Heart right ventricle (tissue), 16 donors: ENCODE measurements at regions of chr17 and their contacts with region 1.

Region 1: GRCh38 chr17:64773836-64774761 is 112.0 kb upstream of the SMURF2 start:
- DNase-seq: no peak
- ATAC-seq: peak in 1 of 8 donors; percentile 1
- H3K4me3 ChIP-seq: no peak overlapping the region
- H3K27ac ChIP-seq: no peak overlapping the region
- H3K4me1 ChIP-seq: peaks cover 15 to 45% (median 27%) of the 10 kb centered on the region in 9 donors
- H3K27me3 ChIP-seq: peaks cover 0 to 13% (median 5%) of the 10 kb centered on the region in 7 donors
- CTCF ChIP-seq: peak in 5 of 9 donors; percentile 7 to 42 (median 29)

Region 2: GRCh38 chr17:64635647-64636307 is 138.3 kb before region 1 on chr17:
- intact Hi-C with region 1: no loop called
- DNase-seq: no peak
- ATAC-seq: no peak
- H3K4me3 ChIP-seq: no peak overlapping the region
- H3K27ac ChIP-seq: no peak overlapping the region
- H3K4me1 ChIP-seq: peaks cover 0 to 52% (median 10%) of the 10 kb centered on the region in 9 donors
- H3K27me3 ChIP-seq: no peaks in the 10 kb centered on the region
- CTCF ChIP-seq: no peak

Region 3: GRCh38 chr17:64707019-64707591 is 67.0 kb before region 1 on chr17:
- intact Hi-C with region 1: loop called in 2 of 10 experiments (anchors 2 to 10 kb)
- DNase-seq: peak; percentile 84 to 93
- ATAC-seq: peak; percentile 84 to 97 (median 94)
- H3K4me3 ChIP-seq: no peak overlapping the region
- H3K27ac ChIP-seq: peak overlapping the region in 8 of 10 donors; percentile 54 to 86 (median 64)
- H3K4me1 ChIP-seq: peaks cover 0 to 45% (median 32%) of the 10 kb centered on the region in 9 donors
- H3K27me3 ChIP-seq: no peaks in the 10 kb centered on the region
- CTCF ChIP-seq: no peak

Region 4: GRCh38 chr17:64718059-64718458 is 56.0 kb before region 1 on chr17:
- intact Hi-C with region 1: loop called in 1 of 10 experiments (anchors 10 kb)
- DNase-seq: no peak
- ATAC-seq: no peak
- H3K4me3 ChIP-seq: no peak overlapping the region
- H3K27ac ChIP-seq: no peak overlapping the region
- H3K4me1 ChIP-seq: peaks cover 0 to 16% (median 4%) of the 10 kb centered on the region in 9 donors
- H3K27me3 ChIP-seq: no peaks in the 10 kb centered on the region
- CTCF ChIP-seq: no peak